ENCODE measurements at regions of chr15 and their contacts with region 1.

Region 1: GRCh38 chr15:85618956-85619491 is 175.7 kb downstream of the KLHL25 start:
- DNase-seq: peak; percentile 33
- H3K4me3 Mint-ChIP-seq: no peak overlapping the region
- H3K27ac Mint-ChIP-seq: no peak overlapping the region
- H3K4me1 Mint-ChIP-seq: peaks cover 31% of the 10 kb centered on the region
- H3K27me3 Mint-ChIP-seq: no peaks in the 10 kb centered on the region

Region 2: GRCh38 chr15:85597155-85597815 is 21.7 kb before region 1 on chr15:
- intact Hi-C with region 1: loop called (anchors 2 kb)
- DNase-seq: no peak
- H3K4me3 Mint-ChIP-seq: peak overlapping the region; percentile 45
- H3K27ac Mint-ChIP-seq: peak overlapping the region; percentile 55
- H3K4me1 Mint-ChIP-seq: peaks cover 39% of the 10 kb centered on the region
- H3K27me3 Mint-ChIP-seq: no peaks in the 10 kb centered on the region

Region 3: GRCh38 chr15:85607842-85608241 is 11.2 kb before region 1 on chr15:
- intact Hi-C with region 1: no loop called
- DNase-seq: no peak
- H3K4me3 Mint-ChIP-seq: no peak overlapping the region
- H3K27ac Mint-ChIP-seq: peak overlapping the region; percentile 68
- H3K4me1 Mint-ChIP-seq: peaks cover 26% of the 10 kb centered on the region
- H3K27me3 Mint-ChIP-seq: no peaks in the 10 kb centered on the region

Region 4: DNA sequence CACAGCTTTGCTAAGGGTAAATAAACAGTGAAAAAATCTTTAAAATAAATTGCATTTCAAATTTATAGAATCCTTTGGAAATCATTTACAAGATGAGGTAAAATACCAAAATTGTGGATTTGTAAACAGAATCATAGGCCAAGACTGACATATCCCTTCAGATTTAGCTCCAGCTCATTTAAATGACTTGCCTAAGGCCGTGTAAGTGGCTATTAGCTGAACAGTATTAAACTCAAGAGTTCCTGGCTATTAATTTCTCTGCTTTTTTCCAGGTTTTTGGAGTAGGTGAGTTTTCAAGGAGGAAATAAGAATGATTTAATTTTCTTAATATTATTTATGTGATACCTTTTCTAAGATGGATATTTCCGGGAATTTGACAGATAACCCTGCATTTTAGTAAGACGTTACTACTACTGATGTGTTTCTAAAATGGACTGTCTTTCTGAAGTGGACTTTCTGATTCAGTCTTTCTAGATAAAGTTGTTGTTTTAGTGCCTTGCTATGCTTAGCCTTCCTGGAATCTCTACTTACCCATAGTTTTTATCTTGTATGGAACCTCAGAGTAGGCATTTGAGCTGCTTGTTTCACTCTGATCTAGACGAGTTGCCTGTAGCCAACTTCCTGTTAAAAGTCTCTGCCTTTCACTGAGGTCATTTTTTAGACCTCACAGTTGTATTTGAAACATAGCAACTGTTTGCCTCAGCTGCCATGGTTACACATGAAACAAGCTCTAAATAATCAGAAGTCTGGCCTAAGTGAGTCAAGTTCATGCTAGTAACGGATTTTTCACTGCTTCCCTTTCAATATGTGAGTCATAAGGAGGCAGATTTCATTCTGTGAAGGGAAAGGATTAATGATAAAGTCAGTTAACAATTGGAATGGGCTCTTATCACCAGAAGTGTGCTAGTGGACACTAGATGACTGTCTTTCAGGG is 48.7 kb after region 1 on chr15:
- intact Hi-C with region 1: loop called (anchors 1 kb)
- DNase-seq: peak; percentile 57
- H3K4me3 Mint-ChIP-seq: no peak overlapping the region
- H3K27ac Mint-ChIP-seq: peak overlapping the region; percentile 91
- H3K4me1 Mint-ChIP-seq: peaks cover 19% of the 10 kb centered on the region
- H3K27me3 Mint-ChIP-seq: no peaks in the 10 kb centered on the region

Region 5: GRCh38 chr15:85707519-85708338 is 88.7 kb after region 1 on chr15:
- intact Hi-C with region 1: loop called (anchors 2 kb)
- DNase-seq: no peak
- H3K4me3 Mint-ChIP-seq: peak overlapping the region; percentile 80
- H3K27ac Mint-ChIP-seq: peak overlapping the region; percentile 98
- H3K4me1 Mint-ChIP-seq: peaks cover 74% of the 10 kb centered on the region
- H3K27me3 Mint-ChIP-seq: no peaks in the 10 kb centered on the region